ENCODE measurements at regions of chr4 and their contacts with region 1.

Region 1: DNA sequence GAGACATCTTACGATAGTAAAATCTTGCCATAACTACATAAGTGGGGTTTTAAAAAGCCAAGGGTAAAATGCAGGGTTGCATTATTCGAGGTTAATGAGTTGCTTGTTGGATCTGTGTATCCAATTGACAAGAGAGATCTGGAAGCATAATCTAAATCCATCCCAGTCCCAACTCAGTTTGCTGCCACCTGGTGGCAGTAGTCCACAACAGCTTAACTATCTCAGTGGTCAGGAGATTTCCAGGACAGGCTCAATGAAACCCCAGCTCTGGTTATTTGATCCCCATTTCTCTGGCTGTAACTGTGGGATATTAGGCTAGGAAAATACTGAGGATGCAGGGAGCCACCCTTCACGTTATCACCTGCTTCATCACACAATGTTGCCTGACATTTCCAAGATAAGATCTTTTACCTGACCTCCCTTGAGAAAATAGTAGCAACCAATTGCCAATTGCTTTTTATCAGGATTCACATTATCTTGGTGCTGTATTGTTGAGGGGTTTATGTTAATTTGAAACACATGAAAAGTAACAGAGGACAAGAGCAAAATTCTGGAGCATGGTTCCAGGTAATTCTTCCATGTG is 88.2 kb upstream of the TNIP3 start:
- DNase-seq: peak; percentile 85
- H3K4me3 Mint-ChIP-seq: no peak overlapping the region
- H3K27ac Mint-ChIP-seq: no peak overlapping the region
- H3K4me1 Mint-ChIP-seq: peaks cover 14% of the 10 kb centered on the region
- H3K27me3 Mint-ChIP-seq: no peaks in the 10 kb centered on the region
- CTCF ChIP-seq: peak; percentile 66

Region 2: DNA sequence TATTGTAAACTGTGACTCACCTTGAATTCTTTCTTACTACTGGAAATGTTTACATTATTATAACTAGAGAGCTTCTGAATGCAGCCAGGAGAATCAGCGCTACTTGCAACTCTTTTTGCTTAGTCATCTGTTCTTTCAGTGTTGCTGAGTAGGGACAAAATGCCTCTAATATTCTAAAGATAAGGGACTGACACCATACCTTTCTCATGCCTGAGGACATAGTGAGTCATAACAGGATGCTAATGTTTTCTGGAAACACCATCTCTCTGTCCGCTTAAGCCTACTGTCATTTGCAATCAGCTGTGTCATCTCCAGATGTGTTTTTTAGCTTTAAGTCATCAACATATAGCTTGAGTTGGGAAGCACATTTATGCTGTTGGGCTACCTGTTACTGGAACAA is 20.2 kb after region 1 on chr4:
- CTCF ChIA-PET with region 1: interaction called, 12 read pairs
- POLR2A ChIA-PET with region 1: interaction called, 15 read pairs
- intact Hi-C with region 1: no loop called
- DNase-seq: peak; percentile 84
- H3K4me3 Mint-ChIP-seq: no peak overlapping the region
- H3K27ac Mint-ChIP-seq: peak overlapping the region; percentile 14
- H3K4me1 Mint-ChIP-seq: peaks cover 17% of the 10 kb centered on the region
- H3K27me3 Mint-ChIP-seq: no peaks in the 10 kb centered on the region
- CTCF ChIP-seq: no peak

Region 3: GRCh38 chr4:121421594-121421993 is 169.3 kb after region 1 on chr4:
- CTCF ChIA-PET with region 1: interaction called, 3 read pairs
- POLR2A ChIA-PET with region 1: no interaction called
- intact Hi-C with region 1: loop called (anchors 1 kb)
- DNase-seq: peak; percentile 59
- H3K4me3 Mint-ChIP-seq: no peak overlapping the region
- H3K27ac Mint-ChIP-seq: peak overlapping the region; percentile 8
- H3K4me1 Mint-ChIP-seq: peaks cover 7% of the 10 kb centered on the region
- H3K27me3 Mint-ChIP-seq: no peaks in the 10 kb centered on the region
- CTCF ChIP-seq: peak; percentile 67

Region 4: GRCh38 chr4:121535351-121535750 is 283.0 kb after region 1 on chr4:
- CTCF ChIA-PET with region 1: no interaction called
- POLR2A ChIA-PET with region 1: no interaction called
- intact Hi-C with region 1: no loop called
- DNase-seq: no peak
- H3K4me3 Mint-ChIP-seq: no peak overlapping the region
- H3K27ac Mint-ChIP-seq: no peak overlapping the region
- H3K4me1 Mint-ChIP-seq: no peaks in the 10 kb centered on the region
- H3K27me3 Mint-ChIP-seq: no peaks in the 10 kb centered on the region
- CTCF ChIP-seq: no peak

Measured in MCF 10A (cell line).